HepG2 (cell line): ENCODE measurements at regions of chr3 and their contacts with region 1.

Region 1: GRCh38 chr3:179322286-179323196 is at the start of gene ZNF639:
- DNase-seq: peak; percentile 78
- ATAC-seq: peak; percentile 92
- H3K4me3 ChIP-seq: peak within 1 kb of the TSS; percentile 84 to 99 (median 92)
- H3K27ac ChIP-seq: peak within 1 kb of the TSS; percentile 85
- H3K4me1 ChIP-seq: peaks cover 48% of the 10 kb centered on the region
- H3K27me3 ChIP-seq: no peaks in the 10 kb centered on the region; a peak in 1 of 5 replicates
- CTCF ChIP-seq: peak; percentile 81
- EP300 ChIP-seq: peak in 1 of 2 experiments; percentile 43; a peak in 2 of 4 replicates
- POLR2A ChIP-seq: peak; percentile 51 to 69; a peak in 1 of 4 replicates
- RAD21 ChIP-seq: peak; percentile 80
- total RNA-seq, gene ZNF639: 42.4 and 46.7 TPM in 2 replicates

Region 2: DNA sequence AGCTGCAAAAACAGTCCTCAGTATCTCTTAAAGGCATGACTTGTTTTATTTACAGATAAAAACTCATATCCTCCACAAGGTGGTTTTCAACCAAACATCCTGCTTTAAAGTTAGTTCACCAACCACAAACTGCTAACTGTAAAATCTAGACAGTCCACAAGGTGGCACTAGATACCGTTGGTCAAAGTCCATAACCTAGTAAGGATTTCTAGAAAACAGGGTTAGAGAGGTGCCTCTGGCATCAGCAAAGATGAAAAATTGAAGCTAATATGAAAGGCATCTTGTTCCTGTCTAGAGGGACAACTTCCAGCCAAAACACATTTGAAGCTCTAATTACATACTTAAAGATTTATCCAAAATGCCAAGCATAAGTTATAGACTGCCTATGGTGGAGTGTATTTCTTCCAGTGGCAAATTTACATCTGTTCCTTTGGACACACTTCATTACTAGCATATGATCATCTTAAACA is 307.0 kb before region 1 on chr3:
- CTCF ChIA-PET with region 1: interaction called, 12 read pairs
- POLR2A ChIA-PET with region 1: no interaction called
- in situ Hi-C with region 1: loop called (anchors 5 kb)
- intact Hi-C with region 1: loop called (anchors 1 kb)
- DNase-seq: peak; percentile 81
- ATAC-seq: peak; percentile 95
- H3K4me3 ChIP-seq: no peak overlapping the region
- H3K27ac ChIP-seq: no peak overlapping the region
- H3K4me1 ChIP-seq: peaks cover 6% of the 10 kb centered on the region; the same call in 1 of the 2 replicates
- H3K27me3 ChIP-seq: no peaks in the 10 kb centered on the region
- CTCF ChIP-seq: peak; percentile 87
- EP300 ChIP-seq: no peak
- POLR2A ChIP-seq: no peak
- RAD21 ChIP-seq: peak; percentile 66; the same call in 1 of the 2 replicates

Region 3: DNA sequence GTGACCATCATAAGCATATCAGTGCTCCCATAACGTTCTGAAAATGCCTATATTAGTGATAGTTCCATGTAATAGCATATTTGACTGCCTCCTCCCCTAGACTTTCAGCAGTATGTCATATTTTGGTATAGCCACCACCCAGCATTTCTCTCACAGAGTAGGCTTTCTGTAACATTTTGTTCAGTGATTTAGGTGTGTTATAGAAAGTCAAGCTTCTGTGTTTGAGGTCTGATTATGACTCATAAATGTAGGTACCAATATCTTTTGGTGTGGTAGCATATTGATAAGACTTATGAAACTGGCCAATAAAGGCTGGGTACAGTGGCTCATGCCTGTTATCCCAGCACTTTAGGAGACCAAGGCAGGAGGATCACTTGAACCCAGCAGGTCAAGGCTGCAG is 216.7 kb before region 1 on chr3:
- CTCF ChIA-PET with region 1: no interaction called
- POLR2A ChIA-PET with region 1: no interaction called
- in situ Hi-C with region 1: no loop called
- intact Hi-C with region 1: loop called (anchors 1 kb)
- DNase-seq: no peak
- ATAC-seq: no peak
- H3K4me3 ChIP-seq: no peak overlapping the region
- H3K27ac ChIP-seq: no peak overlapping the region
- H3K4me1 ChIP-seq: no peaks in the 10 kb centered on the region
- H3K27me3 ChIP-seq: no peaks in the 10 kb centered on the region; a peak in 1 of 5 replicates
- CTCF ChIP-seq: no peak
- EP300 ChIP-seq: no peak
- POLR2A ChIP-seq: no peak
- RAD21 ChIP-seq: no peak

Region 4: DNA sequence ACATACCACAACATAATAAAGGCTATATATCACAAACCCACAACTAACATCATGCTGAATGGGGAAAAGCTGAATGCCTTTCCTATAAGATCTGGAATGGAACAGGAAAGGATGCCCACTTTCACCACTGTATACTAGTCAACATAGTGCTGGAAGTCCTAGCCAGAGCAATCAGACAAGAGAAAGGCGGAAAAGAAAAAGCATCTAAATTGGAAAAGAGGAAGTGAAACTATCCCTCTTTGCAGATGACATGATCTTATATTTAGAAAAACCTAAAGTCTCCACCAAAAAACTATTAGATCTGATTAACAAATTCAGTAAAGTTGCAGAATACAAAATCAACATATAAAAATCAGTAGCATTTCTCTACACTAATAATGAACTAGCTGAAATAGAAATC is 189.0 kb before region 1 on chr3:
- CTCF ChIA-PET with region 1: no interaction called
- POLR2A ChIA-PET with region 1: no interaction called
- in situ Hi-C with region 1: no loop called
- intact Hi-C with region 1: no loop called
- DNase-seq: no peak
- ATAC-seq: no peak
- H3K4me3 ChIP-seq: no peak overlapping the region
- H3K27ac ChIP-seq: no peak overlapping the region
- H3K4me1 ChIP-seq: no peaks in the 10 kb centered on the region
- H3K27me3 ChIP-seq: no peaks in the 10 kb centered on the region
- CTCF ChIP-seq: no peak
- EP300 ChIP-seq: no peak
- POLR2A ChIP-seq: no peak
- RAD21 ChIP-seq: no peak

Region 5: DNA sequence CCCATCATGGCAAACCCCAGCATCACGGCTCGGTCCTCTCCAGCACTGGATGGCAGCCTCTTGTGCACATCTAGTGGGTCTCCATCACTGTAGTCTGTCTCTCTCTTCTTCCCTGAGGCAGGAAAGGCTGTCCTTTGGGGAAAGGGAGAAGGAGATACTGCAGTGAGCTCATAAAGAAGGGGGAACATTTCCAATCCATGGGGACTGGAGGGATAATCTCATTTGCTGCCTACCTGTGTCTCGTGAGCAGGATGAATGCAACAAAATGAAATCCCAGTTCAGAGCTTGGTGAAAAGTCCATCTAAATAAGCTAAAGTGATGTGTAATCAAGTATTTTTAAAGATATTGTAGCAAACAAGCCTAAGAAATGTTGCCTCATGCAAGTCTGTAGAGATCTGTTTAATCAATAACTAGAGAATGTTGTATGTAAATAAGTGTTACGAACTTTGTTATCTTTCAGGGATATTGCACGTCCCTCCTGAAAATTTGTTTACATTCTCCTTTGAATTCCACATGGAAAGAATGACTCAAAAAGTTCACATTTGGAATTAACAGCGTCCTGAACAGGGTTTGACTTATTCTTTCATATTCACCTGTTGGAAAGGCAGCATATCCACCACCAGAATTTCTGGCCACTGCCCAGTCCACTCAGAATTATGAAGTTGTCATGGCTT is 71.6 kb before region 1 on chr3 and contains the start of gene KCNMB3:
- CTCF ChIA-PET with region 1: no interaction called
- POLR2A ChIA-PET with region 1: interaction called, 5 read pairs
- in situ Hi-C with region 1: no loop called
- intact Hi-C with region 1: loop called (anchors 5 kb)
- DNase-seq: peak; percentile 87
- ATAC-seq: peak; percentile 88
- H3K4me3 ChIP-seq: peak within 1 kb of the TSS; percentile 5 to 53 (median 45); a peak in 5 of 6 replicates
- H3K27ac ChIP-seq: peak within 1 kb of the TSS; percentile 83
- H3K4me1 ChIP-seq: peaks cover 47% of the 10 kb centered on the region
- H3K27me3 ChIP-seq: no peaks in the 10 kb centered on the region
- CTCF ChIP-seq: no peak
- EP300 ChIP-seq: peak in 1 of 2 experiments; percentile 86; a peak in 2 of 4 replicates
- POLR2A ChIP-seq: peak in 1 of 2 experiments; percentile 37; a peak in 1 of 4 replicates
- RAD21 ChIP-seq: no peak
- total RNA-seq, gene KCNMB3: 2.4 and 4.3 TPM in 2 replicates

Region 6: GRCh38 chr3:179562591-179563270 is 240.2 kb after region 1 on chr3 and contains the start of gene ACTL6A:
- CTCF ChIA-PET with region 1: interaction called, 16 read pairs
- POLR2A ChIA-PET with region 1: interaction called, 6 read pairs
- in situ Hi-C with region 1: loop called (anchors 5 kb)
- intact Hi-C with region 1: loop called (anchors 1 kb)
- DNase-seq: peak; percentile 98
- ATAC-seq: peak; percentile 97
- H3K4me3 ChIP-seq: peak within 1 kb of the TSS; percentile 87 to 97 (median 91)
- H3K27ac ChIP-seq: peak within 1 kb of the TSS; percentile 94
- H3K4me1 ChIP-seq: peaks cover 23% of the 10 kb centered on the region
- H3K27me3 ChIP-seq: no peaks in the 10 kb centered on the region
- CTCF ChIP-seq: no peak
- EP300 ChIP-seq: no peak
- POLR2A ChIP-seq: peak; percentile 89
- RAD21 ChIP-seq: 0 out of 2 replicates have a peak, but pooled peaks have one; percentile 16
- total RNA-seq, gene ACTL6A: 84.1 and 116 TPM in 2 replicates